Naive thymus-derived CD4-positive, alpha-beta T cell (primary cell): ENCODE measurements at regions of chr3 and their contacts with region 1.

Region 1: GRCh38 chr3:43286115-43286840 is at the start of gene SNRK:
- DNase-seq: peak; percentile 84 to 99 (median 94)
- ATAC-seq: peak; percentile 93
- H3K4me3 ChIP-seq: peak within 1 kb of the TSS; percentile 79
- H3K4me3 Mint-ChIP-seq: peak within 1 kb of the TSS; percentile 97 to 100 (median 99)
- H3K27ac ChIP-seq: peak within 1 kb of the TSS; percentile 99
- H3K27ac Mint-ChIP-seq: peak within 1 kb of the TSS; percentile 93 to 100 (median 99)
- H3K4me1 ChIP-seq: peaks cover 28% of the 10 kb centered on the region in 2 donors
- H3K4me1 Mint-ChIP-seq: peaks cover 27 to 34% (median 33%) of the 10 kb centered on the region in 7 donors
- H3K27me3 ChIP-seq: no peaks in the 10 kb centered on the region
- H3K27me3 Mint-ChIP-seq: peaks cover 0 to 16% (median 0%) of the 10 kb centered on the region in 5 donors
- total RNA-seq, gene SNRK: 71.9 to 176 (median 146) TPM

Region 2: GRCh38 chr3:43105596-43106292 is 180.5 kb before region 1 on chr3 and contains the start of gene POMGNT2:
- CTCF ChIA-PET with region 1: no interaction called
- POLR2A ChIA-PET with region 1: interaction called, 3 read pairs
- intact Hi-C with region 1: loop called (anchors 1 to 2 kb)
- DNase-seq: peak; percentile 78 to 92 (median 88)
- ATAC-seq: peak; percentile 97
- H3K4me3 ChIP-seq: peak within 1 kb of the TSS; percentile 67
- H3K4me3 Mint-ChIP-seq: peak within 1 kb of the TSS; percentile 70 to 88 (median 85)
- H3K27ac ChIP-seq: peak within 1 kb of the TSS; percentile 76
- H3K27ac Mint-ChIP-seq: peak within 1 kb of the TSS in 8 of 9 donors; percentile 46 to 91 (median 71)
- H3K4me1 ChIP-seq: peaks cover 9 to 18% of the 10 kb centered on the region in 2 donors
- H3K4me1 Mint-ChIP-seq: peaks cover 11 to 38% (median 21%) of the 10 kb centered on the region in 7 donors
- H3K27me3 ChIP-seq: no peaks in the 10 kb centered on the region
- H3K27me3 Mint-ChIP-seq: peaks cover 0 to 9% (median 0%) of the 10 kb centered on the region in 5 donors
- total RNA-seq, gene POMGNT2: 3.5 to 7.9 (median 6.2) TPM

Region 3: DNA sequence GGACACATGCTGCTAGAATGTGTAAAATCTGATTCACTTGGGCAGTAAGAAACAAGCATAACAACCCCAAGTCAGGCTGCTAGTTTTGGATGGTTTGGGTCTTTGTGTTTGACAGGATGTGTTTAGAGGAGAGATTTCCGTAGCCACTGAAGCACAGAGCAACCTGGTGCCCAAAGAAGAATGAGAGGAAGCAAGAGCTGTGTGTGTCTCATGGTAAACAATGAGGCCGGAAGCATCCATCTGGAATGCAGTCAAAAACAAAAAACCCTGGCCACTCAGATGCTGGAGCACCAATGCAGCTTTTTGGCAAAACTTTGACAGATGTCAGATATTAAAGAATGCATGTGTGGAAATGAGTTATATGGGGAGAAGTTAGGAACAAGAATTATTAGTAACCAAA is 39.3 kb before region 1 on chr3:
- CTCF ChIA-PET with region 1: no interaction called
- POLR2A ChIA-PET with region 1: interaction called, 12 read pairs
- intact Hi-C with region 1: loop called in 1 of 2 experiments (anchors 2 kb)
- DNase-seq: peak in 6 of 9 donors; percentile 33 to 62 (median 50)
- ATAC-seq: peak; percentile 66
- H3K4me3 ChIP-seq: no peak overlapping the region
- H3K4me3 Mint-ChIP-seq: peak overlapping the region; percentile 8 to 78 (median 61)
- H3K27ac ChIP-seq: peak overlapping the region; percentile 53
- H3K27ac Mint-ChIP-seq: peak overlapping the region; percentile 49 to 90 (median 80)
- H3K4me1 ChIP-seq: peaks cover 9 to 53% of the 10 kb centered on the region in 2 donors
- H3K4me1 Mint-ChIP-seq: peaks cover 35 to 69% (median 65%) of the 10 kb centered on the region in 7 donors
- H3K27me3 ChIP-seq: no peaks in the 10 kb centered on the region
- H3K27me3 Mint-ChIP-seq: peaks cover 0 to 4% (median 0%) of the 10 kb centered on the region in 5 donors

Region 4: DNA sequence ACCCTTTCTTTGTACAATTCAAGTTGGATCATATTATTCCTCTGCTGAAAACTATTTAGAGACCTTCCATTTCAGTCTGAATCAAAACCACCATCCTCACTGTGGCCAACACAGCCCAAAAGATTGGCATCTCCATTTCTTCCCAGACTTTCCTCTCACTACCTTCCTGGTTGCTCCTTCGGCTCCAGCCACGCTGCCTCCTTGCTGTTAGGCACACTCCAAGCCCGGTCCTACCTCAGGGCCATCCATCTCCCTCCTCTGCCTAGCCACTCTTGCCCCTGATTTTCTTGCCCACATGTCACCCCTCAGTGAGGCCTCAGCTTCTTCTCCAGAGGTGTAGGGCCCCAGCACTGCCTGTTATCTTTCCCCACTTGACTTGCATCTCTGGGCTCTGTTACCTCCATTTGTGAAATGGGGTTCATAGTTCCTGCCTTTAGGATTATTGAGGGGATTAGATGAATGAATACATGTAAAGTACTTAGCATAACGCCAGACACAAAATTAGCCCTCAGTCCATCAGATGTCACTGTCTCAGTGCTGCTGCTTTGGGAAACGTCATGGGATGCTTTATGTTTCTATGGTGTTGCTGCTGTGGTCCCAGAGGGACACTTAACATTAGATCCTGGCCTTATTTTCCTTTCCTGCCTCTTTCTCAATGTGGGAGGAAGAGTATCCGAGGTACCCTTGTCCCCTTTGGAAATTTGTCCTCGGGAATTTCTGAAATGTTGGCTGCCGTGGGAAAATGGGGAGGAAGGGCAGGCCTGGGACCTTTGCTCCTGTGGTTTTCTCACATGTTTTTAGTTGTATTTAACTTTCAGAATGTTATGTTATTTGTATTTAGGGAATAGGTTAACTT is 31.4 kb after region 1 on chr3:
- CTCF ChIA-PET with region 1: interaction called, 3 read pairs
- POLR2A ChIA-PET with region 1: interaction called, 3 read pairs
- intact Hi-C with region 1: loop called in 1 of 2 experiments (anchors 2 kb)
- DNase-seq: no peak
- ATAC-seq: peak; percentile 24
- H3K4me3 ChIP-seq: no peak overlapping the region
- H3K4me3 Mint-ChIP-seq: peak overlapping the region in 9 of 10 donors; percentile 37 to 76 (median 59)
- H3K27ac ChIP-seq: peak overlapping the region; percentile 42
- H3K27ac Mint-ChIP-seq: peak overlapping the region; percentile 7 to 91 (median 80)
- H3K4me1 ChIP-seq: peaks cover 28 to 48% of the 10 kb centered on the region in 2 donors
- H3K4me1 Mint-ChIP-seq: peaks cover 40 to 95% (median 93%) of the 10 kb centered on the region in 7 donors
- H3K27me3 ChIP-seq: no peaks in the 10 kb centered on the region
- H3K27me3 Mint-ChIP-seq: no peaks in the 10 kb centered on the region

Region 5: DNA sequence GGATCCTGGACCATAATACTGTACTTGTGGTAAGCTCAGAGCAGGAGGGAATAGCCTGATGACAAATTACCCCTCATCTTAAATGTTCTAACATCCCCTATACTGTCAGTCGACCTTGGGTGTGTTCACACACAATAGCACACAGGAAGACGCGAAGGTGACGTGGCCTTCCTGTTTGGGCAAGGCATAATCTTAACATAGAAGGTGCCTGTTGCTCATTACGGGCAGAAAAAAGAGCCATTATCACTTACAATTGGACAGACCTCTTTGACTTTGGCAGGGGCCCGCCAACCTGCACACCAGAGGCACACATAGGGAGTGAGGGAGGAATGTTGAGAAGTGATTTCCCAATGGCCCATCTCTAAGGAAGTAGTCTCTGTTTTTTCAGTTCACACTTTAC is 191.3 kb after region 1 on chr3:
- CTCF ChIA-PET with region 1: no interaction called
- POLR2A ChIA-PET with region 1: no interaction called
- intact Hi-C with region 1: loop called in 1 of 2 experiments (anchors 1 kb)
- DNase-seq: peak in 8 of 9 donors; percentile 21 to 81 (median 72)
- ATAC-seq: peak; percentile 98
- H3K4me3 ChIP-seq: peak overlapping the region; percentile 7
- H3K4me3 Mint-ChIP-seq: peak overlapping the region; percentile 48 to 78 (median 65)
- H3K27ac ChIP-seq: peak overlapping the region; percentile 71
- H3K27ac Mint-ChIP-seq: peak overlapping the region; percentile 91 to 99 (median 98)
- H3K4me1 ChIP-seq: peaks cover 33 to 40% of the 10 kb centered on the region in 2 donors
- H3K4me1 Mint-ChIP-seq: peaks cover 24 to 66% (median 60%) of the 10 kb centered on the region in 7 donors
- H3K27me3 ChIP-seq: no peaks in the 10 kb centered on the region
- H3K27me3 Mint-ChIP-seq: peaks cover 0 to 2% (median 0%) of the 10 kb centered on the region in 5 donors

Region 6: GRCh38 chr3:44338010-44338827 is 1051.9 kb after region 1 on chr3 and contains the start of gene TCAIM:
- CTCF ChIA-PET with region 1: no interaction called
- POLR2A ChIA-PET with region 1: no interaction called
- intact Hi-C with region 1: loop called (anchors 2 to 10 kb)
- DNase-seq: peak; percentile 97 to 100 (median 100)
- ATAC-seq: peak; percentile 97
- H3K4me3 ChIP-seq: peak within 1 kb of the TSS; percentile 91
- H3K4me3 Mint-ChIP-seq: peak within 1 kb of the TSS; percentile 92 to 99 (median 96)
- H3K27ac ChIP-seq: peak within 1 kb of the TSS; percentile 89
- H3K27ac Mint-ChIP-seq: peak within 1 kb of the TSS; percentile 87 to 99 (median 97)
- H3K4me1 ChIP-seq: peaks cover 14 to 16% of the 10 kb centered on the region in 2 donors
- H3K4me1 Mint-ChIP-seq: peaks cover 12 to 45% (median 34%) of the 10 kb centered on the region in 7 donors
- H3K27me3 ChIP-seq: no peaks in the 10 kb centered on the region
- H3K27me3 Mint-ChIP-seq: peaks cover 5 to 14% (median 7%) of the 10 kb centered on the region in 5 donors
- total RNA-seq, gene TCAIM: 7.7 to 19.8 (median 16.1) TPM